HEK293 (cell line): ENCODE measurements at regions of chr2 and their contacts with region 1.

Region 1: GRCh38 chr2:241686649-241687425 is at the start of gene DTYMK:
- H3K4me3 ChIP-seq: peak within 1 kb of the TSS; percentile 63
- H3K27ac ChIP-seq: peak within 1 kb of the TSS; percentile 85
- H3K4me1 ChIP-seq: 0 out of 2 replicates have a peak, but pooled peaks cover 2% of the 10 kb centered on the region
- CTCF ChIP-seq: no peak; the same call in 1 of the 2 replicates

Region 2: DNA sequence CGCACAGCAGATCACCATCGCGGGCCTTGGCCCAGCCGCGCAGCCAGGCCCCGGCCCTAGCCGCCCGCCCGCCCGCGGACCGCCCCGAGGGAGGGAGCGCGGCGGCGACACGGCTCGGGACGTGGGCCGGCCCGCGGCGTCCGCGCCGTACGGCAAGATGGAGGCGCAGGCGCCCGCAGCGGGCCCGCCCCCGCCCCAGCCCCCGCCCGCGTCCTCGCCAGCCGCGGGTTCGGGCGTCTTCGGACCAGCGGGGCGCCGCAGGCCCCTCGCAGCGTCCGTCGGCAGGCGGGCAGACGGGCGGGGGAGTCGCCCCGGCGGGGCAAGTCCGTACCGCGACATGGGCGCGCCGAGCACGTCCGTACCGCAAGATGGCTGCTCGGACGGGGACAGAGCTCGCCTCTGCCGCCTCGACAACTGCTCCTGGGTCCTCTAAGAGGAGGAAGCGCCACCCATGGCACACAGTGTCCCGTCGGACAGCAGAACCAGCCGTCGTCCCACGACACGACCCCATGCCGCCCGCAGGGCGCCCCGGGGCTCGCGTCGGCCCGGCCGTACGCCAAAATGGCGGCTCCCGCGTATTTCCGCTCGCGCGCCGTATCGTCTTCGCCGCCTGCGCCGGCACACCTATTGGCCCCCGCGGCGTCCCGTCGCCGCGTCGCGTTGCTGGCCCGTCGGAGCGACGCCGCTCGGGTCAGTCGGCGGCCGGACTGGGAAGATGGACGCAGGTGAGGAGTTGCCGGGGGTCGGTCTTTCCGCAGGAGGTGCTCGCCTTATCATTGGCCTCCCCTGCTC is 49.6 kb before region 1 on chr2 and contains the starts of genes ATG4B and THAP4:
- CTCF ChIA-PET with region 1: no interaction called
- POLR2A ChIA-PET with region 1: interaction called, 17 read pairs
- H3K4me3 ChIP-seq: peak within 1 kb of the TSS; percentile 97
- H3K27ac ChIP-seq: peak within 1 kb of the TSS; percentile 97
- H3K4me1 ChIP-seq: no peaks in the 10 kb centered on the region
- CTCF ChIP-seq: 0 out of 2 replicates have a peak, but pooled peaks have one; percentile 12

Region 3: GRCh38 chr2:241702132-241703031 is 15.5 kb after region 1 on chr2:
- CTCF ChIA-PET with region 1: interaction called, 5 read pairs
- POLR2A ChIA-PET with region 1: interaction called, 58 read pairs
- H3K4me3 ChIP-seq: peak overlapping the region; percentile 70
- H3K27ac ChIP-seq: peak overlapping the region; percentile 89
- H3K4me1 ChIP-seq: peaks cover 6% of the 10 kb centered on the region
- CTCF ChIP-seq: peak; percentile 98

Region 4: GRCh38 chr2:241734467-241735208 is 47.8 kb after region 1 on chr2 and contains the start of gene D2HGDH:
- CTCF ChIA-PET with region 1: interaction called, 4 read pairs
- POLR2A ChIA-PET with region 1: interaction called, 13 read pairs
- H3K4me3 ChIP-seq: peak within 1 kb of the TSS; percentile 78
- H3K27ac ChIP-seq: peak within 1 kb of the TSS; percentile 83; the same call in 1 of the 2 replicates
- H3K4me1 ChIP-seq: no peaks in the 10 kb centered on the region
- CTCF ChIP-seq: no peak

Region 5: DNA sequence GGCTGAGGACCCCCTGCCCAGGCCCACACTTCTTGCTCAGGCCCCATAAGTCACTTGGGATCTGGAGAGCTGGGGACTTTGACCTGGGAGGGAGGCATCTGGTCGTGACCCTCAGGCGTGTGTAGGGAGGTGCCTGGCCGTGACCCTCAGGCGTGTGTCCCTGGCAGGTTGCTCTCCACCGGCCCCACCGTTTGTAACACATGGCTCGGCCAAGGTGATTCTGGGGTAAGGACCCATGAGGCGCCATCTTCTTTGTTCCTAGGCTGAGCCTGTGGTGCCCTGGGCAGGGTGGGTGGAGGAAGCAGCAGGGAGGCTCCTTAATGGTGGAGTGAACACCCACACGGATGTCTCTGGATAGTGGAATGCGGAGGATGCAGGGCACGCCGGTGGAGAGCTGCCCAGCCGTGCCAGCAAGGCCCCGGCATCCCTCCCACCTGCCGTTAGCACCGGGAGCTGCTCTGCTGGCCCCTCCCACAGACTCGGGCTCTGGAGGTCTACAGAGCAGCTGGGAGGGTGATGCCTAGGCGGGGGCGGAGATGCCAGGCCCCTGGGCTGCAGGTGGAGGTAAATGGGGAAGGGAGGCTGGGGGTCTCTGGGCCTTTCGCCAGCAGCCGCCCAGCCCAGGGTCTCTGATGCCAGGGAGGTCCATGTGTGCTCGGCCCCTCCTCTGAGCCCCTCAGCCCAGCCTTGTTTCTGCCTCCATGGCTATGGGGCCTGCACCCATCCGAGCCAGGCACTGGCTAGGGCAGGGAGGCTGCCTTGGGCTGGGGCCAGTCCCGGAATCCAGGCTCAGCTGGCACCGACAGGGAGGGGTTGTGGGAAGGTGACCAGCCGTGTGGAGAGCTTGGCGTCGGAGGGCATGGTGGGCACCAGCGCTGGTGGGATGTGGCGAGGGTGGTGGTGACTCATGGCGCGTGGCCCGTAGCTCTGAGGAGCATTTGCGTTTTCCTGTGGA is 88.7 kb after region 1 on chr2:
- CTCF ChIA-PET with region 1: no interaction called
- POLR2A ChIA-PET with region 1: no interaction called
- H3K4me3 ChIP-seq: no peak overlapping the region
- H3K27ac ChIP-seq: no peak overlapping the region
- H3K4me1 ChIP-seq: no peaks in the 10 kb centered on the region
- CTCF ChIP-seq: no peak